ENCODE measurements at regions of chr9 and their contacts with region 1.

Region 1: DNA sequence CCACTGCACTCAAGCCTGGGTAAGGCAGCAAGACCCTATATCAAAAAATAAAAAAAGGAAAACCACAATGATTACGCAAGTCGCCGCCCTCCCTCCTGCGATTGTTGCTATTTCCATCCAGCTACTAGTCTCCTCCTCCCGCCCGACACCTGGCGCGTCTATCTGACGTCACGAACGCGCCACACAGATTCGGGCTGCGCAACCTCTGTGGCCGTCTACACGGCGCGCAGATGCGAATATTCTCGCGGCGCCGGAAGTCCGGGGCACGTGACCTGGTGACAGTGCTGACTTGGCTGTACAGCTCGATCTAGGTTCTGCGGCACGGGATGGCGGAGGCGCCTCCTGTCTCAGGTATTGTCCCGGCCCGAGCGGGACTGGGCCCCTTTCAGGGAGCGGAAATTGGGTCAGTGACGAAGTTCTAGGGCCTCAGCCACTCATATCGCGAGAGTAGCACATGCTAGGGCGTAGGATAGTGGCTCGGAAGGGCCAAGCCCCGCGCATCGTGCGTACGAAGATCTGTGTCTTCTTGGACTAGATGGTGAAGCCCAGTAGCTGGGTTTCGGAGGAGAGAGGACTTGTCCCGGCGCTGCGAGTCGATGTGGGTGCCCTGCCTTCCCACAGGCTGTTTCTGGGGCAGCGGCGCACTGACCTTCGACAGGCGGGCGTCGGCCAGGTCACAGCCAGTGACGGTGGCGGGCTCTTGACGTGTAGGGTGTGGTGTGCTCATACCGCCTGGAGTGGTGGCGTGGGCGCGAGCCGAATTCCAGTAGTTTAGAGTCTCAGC is at the start of gene NFX1:
- DNase-seq: peak; percentile 97 to 100 (median 99)
- H3K4me3 ChIP-seq: peak within 1 kb of the TSS; percentile 75
- H3K4me3 Mint-ChIP-seq: peak within 1 kb of the TSS; percentile 88 to 97 (median 94)
- H3K27ac ChIP-seq: peak within 1 kb of the TSS; percentile 99
- H3K27ac Mint-ChIP-seq: peak within 1 kb of the TSS; percentile 98 to 100 (median 100)
- H3K4me1 ChIP-seq: peaks cover 54% of the 10 kb centered on the region
- H3K4me1 Mint-ChIP-seq: peaks cover 51 to 67% (median 64%) of the 10 kb centered on the region in 3 donors
- H3K27me3 ChIP-seq: no peaks in the 10 kb centered on the region
- H3K27me3 Mint-ChIP-seq: peaks cover 0 to 4% of the 10 kb centered on the region in 2 donors
- total RNA-seq, gene NFX1: 42.7 to 45.6 TPM

Region 2: GRCh38 chr9:33024966-33025571 is 265.4 kb before region 1 on chr9 and contains the start of gene DNAJA1:
- CTCF ChIA-PET with region 1: no interaction called
- POLR2A ChIA-PET with region 1: interaction called, 11 read pairs
- DNase-seq: peak; percentile 92 to 97 (median 96)
- H3K4me3 ChIP-seq: peak within 1 kb of the TSS; percentile 94
- H3K4me3 Mint-ChIP-seq: peak within 1 kb of the TSS; percentile 93 to 99 (median 97)
- H3K27ac ChIP-seq: peak within 1 kb of the TSS; percentile 99
- H3K27ac Mint-ChIP-seq: peak within 1 kb of the TSS; percentile 94 to 99 (median 98)
- H3K4me1 ChIP-seq: peaks cover 54% of the 10 kb centered on the region
- H3K4me1 Mint-ChIP-seq: peaks cover 66 to 83% (median 82%) of the 10 kb centered on the region in 3 donors
- H3K27me3 ChIP-seq: no peaks in the 10 kb centered on the region
- H3K27me3 Mint-ChIP-seq: peaks cover 0 to 7% of the 10 kb centered on the region in 2 donors
- total RNA-seq, gene DNAJA1: 318 to 332 TPM

Region 3: DNA sequence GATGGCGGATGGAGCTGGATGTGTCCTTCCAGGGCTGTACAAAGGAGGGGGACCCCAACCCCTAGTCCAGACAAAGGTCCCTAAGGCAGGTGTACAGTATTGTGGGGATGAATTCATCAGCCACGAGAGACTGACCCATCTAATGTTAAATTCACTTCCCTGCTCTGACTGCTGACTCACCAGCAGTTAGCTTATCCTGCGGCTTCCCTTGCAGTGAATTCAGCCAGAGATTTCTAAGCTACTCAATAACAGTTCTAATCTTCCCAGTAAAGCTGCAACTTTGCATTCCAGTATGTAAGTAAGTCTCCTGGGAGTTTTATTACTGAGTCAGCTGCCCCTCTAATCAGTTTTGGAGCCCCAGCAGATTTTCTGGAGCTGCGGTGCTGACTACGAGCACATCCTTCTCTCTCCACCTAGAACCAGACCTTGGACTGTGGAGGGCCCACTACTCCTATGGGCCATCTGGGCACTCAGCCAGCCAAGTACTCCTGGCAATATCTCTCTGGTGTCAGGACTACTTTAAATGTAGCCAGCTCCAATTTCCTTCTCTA is 139.4 kb before region 1 on chr9:
- CTCF ChIA-PET with region 1: no interaction called
- POLR2A ChIA-PET with region 1: no interaction called
- DNase-seq: no peak
- H3K4me3 ChIP-seq: no peak overlapping the region
- H3K4me3 Mint-ChIP-seq: peak overlapping the region in 6 of 7 donors; percentile 2 to 79 (median 69)
- H3K27ac ChIP-seq: no peak overlapping the region
- H3K27ac Mint-ChIP-seq: peak overlapping the region in 6 of 8 donors; percentile 85 to 98 (median 92)
- H3K4me1 ChIP-seq: peaks cover 65% of the 10 kb centered on the region
- H3K4me1 Mint-ChIP-seq: peaks cover 90 to 98% (median 96%) of the 10 kb centered on the region in 3 donors
- H3K27me3 ChIP-seq: no peaks in the 10 kb centered on the region
- H3K27me3 Mint-ChIP-seq: no peaks in the 10 kb centered on the region

Region 4: GRCh38 chr9:33249087-33249657 is 41.3 kb before region 1 on chr9:
- CTCF ChIA-PET with region 1: no interaction called
- POLR2A ChIA-PET with region 1: interaction called, 11 read pairs
- DNase-seq: no peak
- H3K4me3 ChIP-seq: no peak overlapping the region
- H3K4me3 Mint-ChIP-seq: no peak overlapping the region
- H3K27ac ChIP-seq: no peak overlapping the region
- H3K27ac Mint-ChIP-seq: peak overlapping the region in 1 of 8 donors; percentile 40
- H3K4me1 ChIP-seq: no peaks in the 10 kb centered on the region
- H3K4me1 Mint-ChIP-seq: no peaks in the 10 kb centered on the region
- H3K27me3 ChIP-seq: no peaks in the 10 kb centered on the region
- H3K27me3 Mint-ChIP-seq: no peaks in the 10 kb centered on the region

Region 5: DNA sequence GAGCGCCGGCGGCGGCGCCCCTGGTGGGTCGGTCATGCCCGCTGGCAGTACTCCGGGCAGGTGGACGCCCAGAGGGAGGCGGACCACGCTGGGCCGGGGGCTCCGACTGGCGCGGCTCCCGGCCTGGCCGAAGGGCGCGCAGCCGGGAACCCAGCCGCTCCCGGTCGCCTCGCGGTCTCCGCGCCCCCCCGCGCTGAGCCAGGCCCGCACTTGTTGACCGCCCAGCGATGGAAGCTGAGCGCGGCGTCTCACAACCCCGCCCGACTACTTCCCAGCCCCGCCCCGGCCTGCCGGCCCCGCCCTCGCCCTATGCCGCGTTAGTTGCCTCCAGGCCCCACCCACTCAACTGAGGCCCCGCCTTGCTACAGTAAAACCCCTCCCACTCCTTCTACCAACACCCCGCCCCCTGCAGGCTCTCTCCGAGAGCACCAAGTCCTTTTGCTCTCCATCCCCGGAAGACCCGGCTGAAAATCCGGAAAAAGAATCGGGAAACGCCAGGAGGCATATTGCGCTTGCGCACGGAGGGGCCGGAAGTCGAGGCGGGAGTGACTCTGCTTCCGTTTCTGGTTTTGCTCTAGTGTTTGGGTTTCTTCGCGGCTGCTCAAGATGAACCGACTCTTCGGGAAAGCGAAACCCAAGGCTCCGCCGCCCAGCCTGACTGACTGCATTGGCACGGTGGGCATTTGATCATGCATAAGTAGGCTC is 25.8 kb before region 1 on chr9 and contains the starts of genes BAG1 and CHMP5:
- CTCF ChIA-PET with region 1: interaction called, 6 read pairs
- POLR2A ChIA-PET with region 1: interaction called, 28 read pairs
- DNase-seq: peak; percentile 99 to 100 (median 99)
- H3K4me3 ChIP-seq: peak within 1 kb of the TSS; percentile 92
- H3K4me3 Mint-ChIP-seq: peak within 1 kb of the TSS; percentile 88 to 98 (median 94)
- H3K27ac ChIP-seq: peak within 1 kb of the TSS; percentile 85
- H3K27ac Mint-ChIP-seq: peak within 1 kb of the TSS; percentile 83 to 99 (median 98)
- H3K4me1 ChIP-seq: peaks cover 35% of the 10 kb centered on the region
- H3K4me1 Mint-ChIP-seq: peaks cover 42 to 66% (median 61%) of the 10 kb centered on the region in 3 donors
- H3K27me3 ChIP-seq: no peaks in the 10 kb centered on the region
- H3K27me3 Mint-ChIP-seq: no peaks in the 10 kb centered on the region
- total RNA-seq, gene BAG1: 70.6 to 83.6 TPM
- total RNA-seq, gene CHMP5: 54.3 to 55.0 TPM

Region 6: GRCh38 chr9:33425128-33425533 is 134.7 kb after region 1 on chr9:
- CTCF ChIA-PET with region 1: no interaction called
- POLR2A ChIA-PET with region 1: no interaction called
- DNase-seq: no peak
- H3K4me3 ChIP-seq: no peak overlapping the region
- H3K4me3 Mint-ChIP-seq: no peak overlapping the region
- H3K27ac ChIP-seq: no peak overlapping the region
- H3K27ac Mint-ChIP-seq: peak overlapping the region in 1 of 8 donors; percentile 47
- H3K4me1 ChIP-seq: no peaks in the 10 kb centered on the region
- H3K4me1 Mint-ChIP-seq: peaks cover 6 to 11% (median 9%) of the 10 kb centered on the region in 3 donors
- H3K27me3 ChIP-seq: no peaks in the 10 kb centered on the region
- H3K27me3 Mint-ChIP-seq: peaks cover 0 to 2% of the 10 kb centered on the region in 2 donors

Measured in CD8-positive, alpha-beta memory T cell (primary cell).